Mammary epithelial cell (primary cell): ENCODE measurements at regions of chr12 and their contacts with region 1.

Region 1: GRCh38 chr12:77204091-77204490 is 138.7 kb upstream of the E2F7 start:
- DNase-seq: no peak
- H3K4me3 ChIP-seq: no peak overlapping the region
- H3K27ac ChIP-seq: no peak overlapping the region
- H3K4me1 ChIP-seq: peaks cover 3% of the 10 kb centered on the region
- H3K27me3 ChIP-seq: no peaks in the 10 kb centered on the region
- CTCF ChIP-seq: peak; percentile 11 to 39

Region 2: GRCh38 chr12:77001181-77001758 is 202.8 kb before region 1 on chr12:
- CTCF ChIA-PET with region 1: no interaction called
- dilution Hi-C with region 1: no loop called
- in situ Hi-C with region 1: no loop called
- intact Hi-C with region 1: no loop called
- DNase-seq: no peak
- H3K4me3 ChIP-seq: no peak overlapping the region
- H3K27ac ChIP-seq: no peak overlapping the region
- H3K4me1 ChIP-seq: no peaks in the 10 kb centered on the region
- H3K27me3 ChIP-seq: no peaks in the 10 kb centered on the region
- CTCF ChIP-seq: no peak

Region 3: DNA sequence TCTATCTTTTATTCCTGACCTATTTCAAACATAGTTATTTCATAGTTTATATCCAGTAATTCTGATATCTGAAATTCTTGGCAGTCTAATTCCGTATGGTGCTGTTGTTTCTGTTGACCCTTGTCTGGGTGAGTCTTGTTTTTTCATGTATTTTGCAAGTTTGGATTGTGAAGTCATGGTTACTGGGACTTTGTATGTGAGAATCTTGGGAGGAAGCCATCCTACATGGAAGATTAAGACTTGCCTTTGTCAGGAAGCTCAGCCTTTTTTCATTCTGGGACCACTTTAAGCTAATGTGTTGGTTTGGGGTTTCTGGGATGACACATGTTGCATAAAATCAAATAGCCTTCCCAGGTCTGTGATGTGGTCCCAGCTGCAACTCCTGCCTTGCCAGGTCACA is 52.9 kb after region 1 on chr12:
- CTCF ChIA-PET with region 1: no interaction called
- dilution Hi-C with region 1: no loop called
- in situ Hi-C with region 1: no loop called
- intact Hi-C with region 1: loop called (anchors 10 kb)
- DNase-seq: no peak
- H3K4me3 ChIP-seq: no peak overlapping the region
- H3K27ac ChIP-seq: no peak overlapping the region
- H3K4me1 ChIP-seq: no peaks in the 10 kb centered on the region
- H3K27me3 ChIP-seq: no peaks in the 10 kb centered on the region
- CTCF ChIP-seq: no peak